Heart right ventricle (tissue), 16 donors: ENCODE measurements at regions of chr4 and their contacts with region 1.

Region 1: DNA sequence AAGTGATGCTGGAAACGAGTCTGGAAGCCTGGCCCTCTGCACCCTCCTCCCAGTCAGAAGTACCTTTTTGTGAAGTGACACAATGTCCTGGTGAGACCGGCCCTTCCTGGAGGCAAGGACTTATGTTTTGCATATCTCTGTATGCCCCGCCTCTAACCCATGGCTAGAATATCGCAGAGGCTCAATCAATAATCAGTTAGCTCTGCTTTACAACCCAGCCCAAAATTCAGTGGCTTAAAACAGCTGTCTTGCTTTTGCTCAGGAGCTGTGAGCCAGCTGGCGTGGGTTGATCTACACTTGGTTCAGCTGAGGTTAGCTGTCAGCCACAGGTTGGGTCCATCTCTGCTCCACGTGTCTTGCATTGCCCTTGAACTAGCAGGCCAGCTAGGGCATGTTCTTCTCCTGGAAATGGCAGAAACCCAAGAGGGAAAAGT is 98.8 kb upstream of the METTL14 start:
- DNase-seq: peak; percentile 42
- ATAC-seq: peak; percentile 61 to 85 (median 72)
- H3K4me3 ChIP-seq: peak overlapping the region in 1 of 10 donors; percentile 13
- H3K27ac ChIP-seq: peak overlapping the region in 9 of 10 donors; percentile 39 to 70 (median 52)
- H3K4me1 ChIP-seq: peaks cover 0 to 19% (median 9%) of the 10 kb centered on the region in 9 donors
- H3K27me3 ChIP-seq: peaks cover 0 to 25% (median 0%) of the 10 kb centered on the region in 7 donors
- CTCF ChIP-seq: no peak

Region 2: DNA sequence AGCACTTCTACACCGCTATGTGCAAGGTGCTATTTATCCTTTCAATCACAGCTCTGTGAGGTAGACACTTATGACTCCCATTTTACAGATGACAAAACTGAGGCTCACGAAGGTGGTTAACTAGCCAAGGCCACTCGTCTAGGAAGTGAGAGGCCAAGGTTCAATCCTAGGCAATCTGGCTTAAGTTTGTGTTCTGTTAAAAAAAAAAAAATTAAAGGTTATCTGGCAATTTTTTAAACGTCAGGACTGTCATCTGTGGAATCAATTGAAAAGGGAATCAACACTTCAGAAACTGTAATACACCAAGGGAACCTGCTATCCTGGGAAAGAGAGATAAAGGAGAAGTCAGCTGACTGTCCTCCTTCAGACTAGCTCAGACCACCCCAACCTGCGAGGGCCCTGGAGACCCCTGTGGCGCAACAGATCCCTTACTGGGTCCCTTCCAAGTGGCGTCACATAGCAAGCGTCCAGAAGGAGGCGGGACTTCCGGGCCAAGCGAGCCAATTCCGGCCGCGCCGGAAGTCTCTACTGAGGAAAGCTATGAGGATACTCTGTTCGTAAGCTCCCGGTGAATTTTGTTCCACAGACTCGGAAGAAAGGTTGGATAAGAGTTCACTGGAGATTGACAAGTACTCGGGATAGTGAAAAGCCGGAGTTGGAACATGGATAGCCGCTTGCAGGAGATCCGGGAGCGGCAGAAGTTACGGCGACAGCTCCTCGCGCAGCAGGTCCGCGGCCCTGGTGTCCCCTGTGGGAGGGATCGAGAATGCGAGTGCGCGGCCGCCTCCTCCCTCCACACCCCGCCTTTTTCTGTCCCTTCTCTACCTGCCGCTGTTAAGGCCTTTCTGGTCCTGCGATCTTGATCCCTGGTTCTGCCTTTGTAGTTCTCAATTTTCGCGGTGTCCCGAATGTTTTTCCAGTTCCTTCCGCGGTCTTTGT is 98.8 kb after region 1 on chr4 and contains the start of gene METTL14:
- intact Hi-C with region 1: loop called in 1 of 10 experiments (anchors 5 kb)
- DNase-seq: peak; percentile 93 to 94
- ATAC-seq: peak; percentile 96 to 99 (median 98)
- H3K4me3 ChIP-seq: peak within 1 kb of the TSS; percentile 49 to 82 (median 72)
- H3K27ac ChIP-seq: peak within 1 kb of the TSS; percentile 32 to 94 (median 91)
- H3K4me1 ChIP-seq: peaks cover 9 to 25% (median 17%) of the 10 kb centered on the region in 9 donors
- H3K27me3 ChIP-seq: no peaks in the 10 kb centered on the region
- CTCF ChIP-seq: peak in 4 of 9 donors; percentile 27 to 37 (median 34)
- total RNA-seq, gene METTL14: 28.4 to 37.2 (median 32.7) TPM